ENCODE measurements at regions of chr16 and their contacts with region 1.

Region 1: GRCh38 chr16:60203525-60204124 is 1469.5 kb upstream of the GOT2 start:
- H3K4me3 Mint-ChIP-seq: no peak overlapping the region
- H3K27ac Mint-ChIP-seq: no peak overlapping the region
- H3K4me1 Mint-ChIP-seq: no peaks in the 10 kb centered on the region
- H3K27me3 Mint-ChIP-seq: no peaks in the 10 kb centered on the region

Region 2: GRCh38 chr16:58843675-58844074 is 1360.0 kb before region 1 on chr16:
- intact Hi-C with region 1: loop called (anchors 5 kb)
- H3K4me3 Mint-ChIP-seq: no peak overlapping the region
- H3K27ac Mint-ChIP-seq: no peak overlapping the region
- H3K4me1 Mint-ChIP-seq: peaks cover 14% of the 10 kb centered on the region
- H3K27me3 Mint-ChIP-seq: no peaks in the 10 kb centered on the region